ENCODE measurements at regions of chr15 and their contacts with region 1.

Region 1: DNA sequence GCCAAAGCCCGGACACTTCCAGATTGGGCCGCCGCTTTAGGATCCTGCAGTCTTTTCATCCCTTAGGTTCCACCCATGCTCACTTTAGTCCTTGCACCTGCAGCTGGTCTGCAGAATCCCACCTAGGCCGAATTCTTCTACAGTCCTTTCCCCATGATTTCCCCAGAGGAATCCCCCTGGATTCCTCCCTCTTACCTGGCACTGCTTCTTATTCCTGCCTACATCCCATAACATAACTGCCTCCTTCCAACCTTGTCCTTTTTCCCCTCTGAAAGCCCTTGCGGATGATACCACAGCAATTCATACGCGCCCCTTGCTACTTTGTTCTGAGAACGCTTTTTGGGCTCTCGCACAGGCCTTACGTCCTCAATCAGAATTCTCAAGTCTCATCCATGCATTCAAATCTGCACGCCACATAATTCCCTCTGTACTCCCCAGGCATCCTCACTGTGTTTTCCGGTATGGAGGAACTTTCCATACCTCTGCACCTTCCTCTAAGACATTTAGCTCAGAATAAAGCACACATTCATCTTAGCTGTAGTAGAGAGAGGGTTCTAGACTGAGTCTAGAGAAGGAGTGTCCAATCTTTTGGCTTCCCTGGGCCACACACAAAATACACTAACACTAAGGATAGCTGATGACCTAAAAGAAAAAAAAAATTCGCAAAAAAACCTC is 619 bp downstream of the EIF2AK4 start:
- DNase-seq: no peak
- ATAC-seq: peak; percentile 14 to 23; a peak in 4 of 6 replicates
- H3K4me3 ChIP-seq: peak overlapping the region; percentile 73
- H3K27ac ChIP-seq: peak overlapping the region; percentile 86 to 95
- H3K4me1 ChIP-seq: peaks cover 30% of the 10 kb centered on the region
- CTCF ChIP-seq: no peak
- EP300 ChIP-seq: no peak
- POLR2A ChIP-seq: no peak
- RAD21 ChIP-seq: no peak

Region 2: GRCh38 chr15:39887832-39888231 is 46.7 kb before region 1 on chr15:
- CTCF ChIA-PET with region 1: interaction called, 10 read pairs
- POLR2A ChIA-PET with region 1: interaction called, 11 read pairs
- DNase-seq: peak; percentile 5 to 50
- ATAC-seq: peak; percentile 81 to 82; a peak in 5 of 6 replicates
- H3K4me3 ChIP-seq: no peak overlapping the region
- H3K27ac ChIP-seq: no peak overlapping the region
- H3K4me1 ChIP-seq: no peaks in the 10 kb centered on the region
- CTCF ChIP-seq: peak; percentile 32
- EP300 ChIP-seq: no peak
- POLR2A ChIP-seq: no peak
- RAD21 ChIP-seq: peak; percentile 40 to 41; a peak in 3 of 5 replicates

Region 3: DNA sequence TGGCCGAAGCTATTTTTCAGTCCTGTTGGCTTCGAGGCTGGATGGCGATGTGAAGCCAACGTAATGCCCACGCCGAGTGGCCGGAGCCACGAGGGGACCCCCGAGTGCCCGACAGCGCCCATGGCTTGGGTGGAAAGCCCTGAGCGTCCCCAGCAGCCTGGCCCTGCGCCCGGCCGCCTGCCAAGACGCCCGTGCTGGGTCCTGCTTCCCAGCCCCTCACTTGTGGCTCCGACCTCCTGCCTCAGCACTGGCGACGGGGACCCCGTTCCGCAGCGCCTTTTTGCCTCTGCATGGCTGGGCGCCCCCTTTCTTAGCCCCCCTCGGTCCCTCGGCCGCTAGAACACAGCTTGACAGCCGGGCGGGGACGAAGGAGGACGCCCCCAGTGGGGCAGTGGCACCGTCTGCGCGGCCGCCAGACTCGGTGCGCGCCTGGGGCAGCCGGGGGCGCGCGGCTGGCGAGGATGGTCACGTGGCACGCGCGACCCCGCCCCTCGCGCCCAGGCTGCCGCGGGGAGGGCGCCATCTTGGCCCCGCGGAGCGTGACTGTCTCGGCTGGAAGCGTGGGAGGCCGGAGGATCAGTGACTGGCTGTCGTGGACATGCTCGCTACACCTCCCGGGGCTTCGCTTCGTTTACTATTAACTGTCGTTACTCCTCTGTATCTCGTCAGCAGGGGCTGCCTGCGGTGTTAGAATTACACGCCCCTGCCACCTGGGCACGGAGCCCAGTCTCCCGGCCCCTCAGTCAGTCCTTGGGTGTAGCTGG is 13.8 kb before region 1 on chr15:
- CTCF ChIA-PET with region 1: interaction called, 3 read pairs
- POLR2A ChIA-PET with region 1: interaction called, 12 read pairs
- DNase-seq: peak; percentile 26 to 66
- ATAC-seq: peak; percentile 80 to 86
- H3K4me3 ChIP-seq: peak overlapping the region; percentile 50
- H3K27ac ChIP-seq: peak overlapping the region; percentile 68 to 91
- H3K4me1 ChIP-seq: peaks cover 15% of the 10 kb centered on the region; the same call in 2 of the 3 replicates
- CTCF ChIP-seq: no peak
- EP300 ChIP-seq: no peak
- POLR2A ChIP-seq: peak; percentile 85
- RAD21 ChIP-seq: no peak

Region 4: DNA sequence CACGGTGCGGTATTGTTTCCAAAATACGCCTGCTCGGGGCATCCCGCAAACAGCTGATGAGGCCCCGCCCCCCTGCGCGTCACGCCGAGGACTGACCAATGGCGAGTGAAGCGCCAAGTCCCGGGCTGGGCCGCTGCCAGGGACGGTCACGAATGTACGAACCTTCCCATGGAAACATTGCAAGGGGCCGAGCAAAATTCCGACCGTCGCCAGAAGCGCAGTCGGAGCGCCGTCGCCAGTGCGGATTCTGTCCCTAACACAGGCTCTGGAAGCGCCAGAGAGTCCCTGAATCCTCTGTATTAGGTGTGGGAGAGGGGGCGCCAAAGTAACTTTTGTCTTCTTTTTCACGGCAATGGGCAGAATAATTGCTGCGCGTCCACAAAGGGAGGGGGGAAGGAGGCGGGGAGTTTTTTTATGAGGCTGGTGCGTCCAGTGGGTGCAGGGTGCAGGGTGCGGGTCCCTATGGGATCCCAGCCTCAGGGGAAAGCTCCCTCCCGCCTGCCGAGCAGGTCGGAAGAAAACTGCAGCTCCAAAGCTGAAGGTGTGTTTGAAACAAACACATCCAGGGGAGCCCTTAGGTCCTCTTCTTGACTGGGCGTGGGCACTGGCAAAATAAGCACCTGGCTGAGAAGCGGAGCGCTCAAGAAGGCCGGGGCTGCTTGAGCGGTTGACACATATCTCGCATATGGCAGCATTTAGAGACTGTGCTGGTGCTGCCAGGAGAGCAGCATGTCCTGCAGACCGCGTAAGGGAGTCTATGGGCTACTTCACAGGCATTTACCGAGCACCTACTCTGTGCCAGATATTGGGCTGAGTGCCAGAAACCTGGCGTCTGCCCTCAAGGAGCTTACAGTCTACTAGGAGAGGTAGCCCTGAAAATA is 174.6 kb after region 1 on chr15 and contains the start of gene BMF:
- CTCF ChIA-PET with region 1: no interaction called
- POLR2A ChIA-PET with region 1: no interaction called
- DNase-seq: peak; percentile 85 to 96
- ATAC-seq: peak; percentile 83 to 87
- H3K4me3 ChIP-seq: peak within 1 kb of the TSS; percentile 57
- H3K27ac ChIP-seq: peak within 1 kb of the TSS; percentile 59 to 82; a peak in 5 of 6 replicates
- H3K4me1 ChIP-seq: peaks cover 31% of the 10 kb centered on the region
- CTCF ChIP-seq: peak; percentile 40
- EP300 ChIP-seq: no peak
- POLR2A ChIP-seq: no peak
- RAD21 ChIP-seq: peak; percentile 17 to 36; a peak in 2 of 5 replicates
- polyA plus RNA-seq, gene BMF: 1.4 and 2.1 TPM in 2 replicates